ENCODE measurements at regions of chr2 and their contacts with region 1.

Region 1: DNA sequence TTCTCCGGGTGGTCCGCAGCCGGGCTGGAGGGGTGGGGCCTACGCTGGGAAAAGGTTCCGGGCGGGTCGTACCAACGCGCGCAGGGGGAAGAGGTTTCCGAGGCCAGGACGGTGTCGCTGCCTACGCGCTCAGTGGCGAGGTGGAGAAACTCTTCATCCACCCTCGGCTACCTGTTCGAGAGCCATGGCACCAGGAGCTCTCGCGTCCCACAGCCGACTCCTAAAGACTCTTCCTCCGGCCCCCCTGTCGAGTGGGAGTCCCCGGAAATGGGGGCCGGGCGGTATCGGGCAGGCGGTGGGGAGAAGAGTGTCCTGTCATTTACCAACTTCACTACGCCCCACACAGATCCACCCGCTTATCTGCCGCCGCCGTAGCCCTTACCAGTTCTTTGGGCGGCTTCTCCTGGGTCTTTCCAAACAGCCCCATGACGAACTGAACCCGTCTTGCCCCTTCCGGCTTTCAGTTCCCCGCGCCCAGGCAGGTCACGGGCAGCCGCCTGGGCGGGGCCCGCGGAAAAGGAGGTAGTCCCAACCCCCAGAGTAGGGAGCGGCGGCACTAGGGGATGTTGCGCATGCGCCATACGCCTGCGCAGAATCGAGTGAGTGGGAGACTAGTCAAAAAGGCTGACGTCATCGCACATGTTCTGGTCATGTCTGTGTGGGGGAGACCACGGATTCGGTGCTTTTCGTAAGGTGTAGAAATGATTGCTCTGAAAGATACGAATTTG is at the start of gene CHMP3:
- DNase-seq: peak; percentile 96
- H3K4me3 Mint-ChIP-seq: peak within 1 kb of the TSS; percentile 97
- H3K27ac Mint-ChIP-seq: peak within 1 kb of the TSS; percentile 98
- H3K4me1 Mint-ChIP-seq: peaks cover 46% of the 10 kb centered on the region
- H3K27me3 Mint-ChIP-seq: no peaks in the 10 kb centered on the region
- total RNA-seq, gene CHMP3: 27.7 and 27.9 TPM in 2 replicates

Region 2: GRCh38 chr2:86453836-86454235 is 109.2 kb before region 1 on chr2:
- intact Hi-C with region 1: no loop called
- DNase-seq: no peak
- H3K4me3 Mint-ChIP-seq: no peak overlapping the region
- H3K27ac Mint-ChIP-seq: no peak overlapping the region
- H3K4me1 Mint-ChIP-seq: peaks cover 29% of the 10 kb centered on the region
- H3K27me3 Mint-ChIP-seq: no peaks in the 10 kb centered on the region

Region 3: DNA sequence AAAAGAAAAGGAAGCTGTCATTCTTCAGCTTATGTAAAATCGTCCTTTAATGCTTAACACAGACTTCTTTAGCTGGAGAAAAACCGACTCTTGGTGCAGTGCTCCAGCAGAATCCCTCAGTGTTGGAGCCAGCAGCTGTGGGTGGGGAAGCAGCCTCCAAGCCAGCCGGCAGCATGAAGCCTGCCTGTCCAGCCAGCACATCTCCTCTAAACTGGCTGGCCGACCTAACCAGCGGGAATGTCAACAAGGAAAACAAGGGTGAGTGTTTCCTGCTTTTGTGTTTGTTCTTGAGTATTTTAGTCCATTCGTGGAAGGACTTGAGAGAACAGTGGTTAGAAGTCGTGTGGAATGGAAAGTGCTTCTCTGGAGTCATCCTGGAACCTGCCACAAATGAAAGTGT is 83.0 kb before region 1 on chr2:
- intact Hi-C with region 1: loop called (anchors 10 kb)
- DNase-seq: no peak
- H3K4me3 Mint-ChIP-seq: no peak overlapping the region
- H3K27ac Mint-ChIP-seq: no peak overlapping the region
- H3K4me1 Mint-ChIP-seq: peaks cover 66% of the 10 kb centered on the region
- H3K27me3 Mint-ChIP-seq: no peaks in the 10 kb centered on the region

Region 4: GRCh38 chr2:86584151-86584913 is 21.2 kb after region 1 on chr2:
- intact Hi-C with region 1: loop called (anchors 1 kb)
- DNase-seq: no peak
- H3K4me3 Mint-ChIP-seq: peak overlapping the region; percentile 5
- H3K27ac Mint-ChIP-seq: peak overlapping the region; percentile 78
- H3K4me1 Mint-ChIP-seq: peaks cover 15% of the 10 kb centered on the region
- H3K27me3 Mint-ChIP-seq: peaks cover 3% of the 10 kb centered on the region

Measured in activated T-helper 1 cell treated with anti-CD3 and anti-CD28 coated beads, Interleukin-12 subunit alpha, Interleukin-12 subunit beta, Interleukin-2, Interleukin-4 antibody, amounts not matched to agents 30 ng/mL and 10 ng/mL and 1 ng/mL, durations not matched to agents 14 hours and 24 hours and 36 hours (primary cell).